Transverse colon (tissue), 4 donors: ENCODE measurements at regions of chr15 and their contacts with region 1.

Region 1: GRCh38 chr15:86231864-86232721 is 152.4 kb downstream of the AGBL1 start:
- DNase-seq: peak; percentile 17
- H3K4me3 ChIP-seq: no peak overlapping the region
- H3K27ac ChIP-seq: no peak overlapping the region
- H3K4me1 ChIP-seq: peaks cover 0 to 4% (median 0%) of the 10 kb centered on the region in 4 donors
- H3K27me3 ChIP-seq: peaks cover 23% of the 10 kb centered on the region
- CTCF ChIP-seq: peak; percentile 39 to 63 (median 55)
- EP300 ChIP-seq: no peak
- POLR2A ChIP-seq: no peak

Region 2: GRCh38 chr15:86061581-86061980 is 170.5 kb before region 1 on chr15:
- in situ Hi-C with region 1: no loop called
- intact Hi-C with region 1: no loop called
- DNase-seq: no peak
- H3K4me3 ChIP-seq: no peak overlapping the region
- H3K27ac ChIP-seq: no peak overlapping the region
- H3K4me1 ChIP-seq: no peaks in the 10 kb centered on the region
- H3K27me3 ChIP-seq: peaks cover 6% of the 10 kb centered on the region
- CTCF ChIP-seq: no peak
- EP300 ChIP-seq: no peak
- POLR2A ChIP-seq: no peak

Region 3: GRCh38 chr15:86373147-86373546 is 141.1 kb after region 1 on chr15:
- in situ Hi-C with region 1: no loop called
- intact Hi-C with region 1: no loop called
- DNase-seq: no peak
- H3K4me3 ChIP-seq: no peak overlapping the region
- H3K27ac ChIP-seq: no peak overlapping the region
- H3K4me1 ChIP-seq: no peaks in the 10 kb centered on the region
- H3K27me3 ChIP-seq: no peaks in the 10 kb centered on the region
- CTCF ChIP-seq: no peak
- EP300 ChIP-seq: no peak
- POLR2A ChIP-seq: no peak

Region 4: DNA sequence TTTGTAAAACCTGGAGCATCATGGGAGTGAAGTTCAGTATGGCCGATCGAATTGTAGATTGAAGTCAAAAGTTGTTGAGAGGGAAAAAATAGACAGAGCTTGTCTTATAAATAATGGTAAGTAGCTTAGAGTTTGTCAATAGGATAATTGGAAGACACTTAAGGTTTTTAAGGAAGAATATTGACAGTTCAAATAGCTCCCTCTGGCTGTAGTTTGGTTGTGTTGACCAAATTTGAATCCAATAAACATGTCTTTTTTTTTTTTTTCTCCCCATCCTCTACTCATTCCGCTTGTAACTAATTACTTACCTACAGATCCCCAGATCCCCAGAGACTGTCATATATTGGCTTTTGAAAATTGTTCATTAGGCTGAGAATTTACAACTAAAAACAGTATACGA is 524.6 kb after region 1 on chr15:
- in situ Hi-C with region 1: loop called in 1 of 4 experiments (anchors 25 kb)
- intact Hi-C with region 1: no loop called
- DNase-seq: no peak
- H3K4me3 ChIP-seq: no peak overlapping the region
- H3K27ac ChIP-seq: no peak overlapping the region
- H3K4me1 ChIP-seq: no peaks in the 10 kb centered on the region
- H3K27me3 ChIP-seq: no peaks in the 10 kb centered on the region
- CTCF ChIP-seq: peak in 1 of 5 experiments; percentile 3
- EP300 ChIP-seq: no peak
- POLR2A ChIP-seq: no peak

Region 5: GRCh38 chr15:86903642-86904421 is 671.7 kb after region 1 on chr15:
- in situ Hi-C with region 1: no loop called
- intact Hi-C with region 1: loop called (anchors 5 kb)
- DNase-seq: no peak
- H3K4me3 ChIP-seq: no peak overlapping the region
- H3K27ac ChIP-seq: no peak overlapping the region
- H3K4me1 ChIP-seq: no peaks in the 10 kb centered on the region
- H3K27me3 ChIP-seq: no peaks in the 10 kb centered on the region
- CTCF ChIP-seq: no peak
- EP300 ChIP-seq: no peak
- POLR2A ChIP-seq: no peak